ENCODE measurements at regions of chr2 and their contacts with region 1.

Region 1: DNA sequence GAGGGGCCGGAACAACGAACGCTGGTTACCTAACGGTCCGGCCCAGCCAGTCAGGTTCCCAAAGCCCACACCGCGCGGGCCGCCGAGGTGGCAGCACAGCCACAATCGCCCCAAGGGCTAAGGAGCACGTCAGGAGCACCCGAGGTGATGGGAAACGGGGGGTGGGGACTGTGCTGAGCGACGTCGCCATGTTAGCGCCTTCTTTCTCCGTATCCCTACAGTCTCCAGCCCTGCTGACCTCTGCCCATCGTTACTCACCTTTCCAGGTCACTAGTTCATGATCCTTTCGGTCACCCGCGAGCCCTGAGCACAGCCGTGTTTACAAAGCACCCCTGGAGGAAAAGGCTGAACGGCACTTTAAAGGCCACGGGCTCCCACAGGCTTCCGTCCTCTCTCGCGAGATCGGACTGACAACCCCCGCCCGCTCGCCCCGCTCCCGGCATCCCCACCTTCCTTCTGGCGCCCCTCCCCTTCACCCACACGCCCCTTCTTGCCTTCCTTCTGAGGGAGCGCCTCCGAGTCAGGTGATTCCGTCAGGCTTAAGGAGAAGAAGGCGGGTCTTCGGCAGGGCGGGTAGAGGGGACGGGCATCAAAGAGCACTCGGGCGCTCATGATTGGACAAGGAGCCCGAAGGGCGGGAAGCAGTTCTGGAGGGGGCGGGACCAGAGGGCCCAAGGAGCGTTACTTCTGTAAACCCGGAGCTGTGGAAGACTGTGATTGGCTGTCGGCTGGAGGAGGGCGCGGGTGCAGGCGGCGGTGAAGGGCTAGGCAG is at the start of gene ATF2:
- DNase-seq: peak; percentile 98
- H3K4me3 Mint-ChIP-seq: peak within 1 kb of the TSS; percentile 97
- H3K27ac Mint-ChIP-seq: peak within 1 kb of the TSS; percentile 97
- H3K4me1 Mint-ChIP-seq: peaks cover 53% of the 10 kb centered on the region
- H3K27me3 Mint-ChIP-seq: no peaks in the 10 kb centered on the region
- total RNA-seq, gene ATF2: 57.0 and 59.7 TPM in 2 replicates

Region 2: DNA sequence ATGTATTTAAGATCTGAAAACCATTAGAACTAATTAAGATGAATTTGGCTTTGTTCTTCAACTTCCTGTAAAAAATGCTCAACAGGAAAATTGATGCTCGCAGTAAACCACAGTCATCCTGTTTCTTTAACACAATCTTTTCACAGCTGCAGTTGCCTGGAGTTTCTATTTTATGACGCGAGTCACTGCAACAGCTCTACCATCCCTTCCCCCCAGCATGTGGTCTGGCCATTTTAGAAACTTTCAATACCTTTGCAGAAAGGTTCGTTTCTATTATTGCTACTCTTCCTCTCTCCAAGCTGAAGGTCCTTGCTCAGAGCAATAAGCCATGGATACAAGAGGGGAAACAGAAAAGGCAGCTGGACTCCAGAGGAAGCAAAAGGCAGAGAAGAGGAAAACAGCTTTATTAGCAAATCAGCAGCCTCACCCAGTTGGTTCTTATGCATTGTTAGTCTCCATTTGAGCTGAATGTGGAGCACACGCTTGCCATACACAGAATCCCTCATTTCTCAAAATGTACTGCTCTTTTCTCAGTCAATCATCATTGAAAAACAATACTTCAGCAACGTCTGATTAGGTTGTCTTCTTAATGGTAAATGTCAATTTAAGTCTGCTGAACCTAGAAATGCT is 574.3 kb before region 1 on chr2:
- intact Hi-C with region 1: loop called (anchors 5 kb)
- DNase-seq: peak; percentile 69
- H3K4me3 Mint-ChIP-seq: peak overlapping the region; percentile 86
- H3K27ac Mint-ChIP-seq: peak overlapping the region; percentile 98
- H3K4me1 Mint-ChIP-seq: peaks cover 58% of the 10 kb centered on the region
- H3K27me3 Mint-ChIP-seq: no peaks in the 10 kb centered on the region

Region 3: GRCh38 chr2:174835797-174836255 is 332.2 kb before region 1 on chr2:
- intact Hi-C with region 1: loop called (anchors 5 kb)
- DNase-seq: no peak
- H3K4me3 Mint-ChIP-seq: peak overlapping the region; percentile 43
- H3K27ac Mint-ChIP-seq: peak overlapping the region; percentile 96
- H3K4me1 Mint-ChIP-seq: peaks cover 40% of the 10 kb centered on the region
- H3K27me3 Mint-ChIP-seq: no peaks in the 10 kb centered on the region

Region 4: GRCh38 chr2:175154661-175155082 is 13.3 kb before region 1 on chr2:
- intact Hi-C with region 1: loop called (anchors 1 kb)
- DNase-seq: no peak
- H3K4me3 Mint-ChIP-seq: peak overlapping the region; percentile 41
- H3K27ac Mint-ChIP-seq: peak overlapping the region; percentile 92
- H3K4me1 Mint-ChIP-seq: peaks cover 31% of the 10 kb centered on the region
- H3K27me3 Mint-ChIP-seq: no peaks in the 10 kb centered on the region

Region 5: GRCh38 chr2:175227393-175227792 is 59.4 kb after region 1 on chr2:
- intact Hi-C with region 1: loop called (anchors 1 kb)
- DNase-seq: no peak
- H3K4me3 Mint-ChIP-seq: peak overlapping the region; percentile 3
- H3K27ac Mint-ChIP-seq: peak overlapping the region; percentile 80
- H3K4me1 Mint-ChIP-seq: peaks cover 26% of the 10 kb centered on the region
- H3K27me3 Mint-ChIP-seq: peaks cover 19% of the 10 kb centered on the region